ENCODE measurements at regions of chr1 and their contacts with region 1.

Region 1: DNA sequence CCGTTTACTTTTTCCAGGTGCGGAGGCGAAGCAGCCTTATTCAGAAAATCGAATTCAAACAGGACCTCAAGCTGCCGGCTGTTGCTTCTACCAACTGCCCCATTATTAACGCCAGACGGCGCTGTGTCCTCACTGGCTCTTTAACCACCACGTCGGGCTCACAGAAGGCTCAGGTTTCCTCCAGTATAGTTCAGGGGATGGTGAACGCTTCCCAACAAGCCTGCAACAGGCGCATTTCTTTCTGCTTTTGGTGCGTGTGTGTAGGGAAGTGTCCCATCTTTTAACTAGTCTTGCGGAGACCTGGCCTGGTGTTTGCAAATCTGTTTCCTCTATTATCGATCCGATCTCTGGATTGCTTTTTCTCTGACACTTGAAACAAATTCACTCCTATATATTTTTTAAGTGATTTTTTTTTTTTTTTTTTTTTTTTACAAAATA is 791 bp upstream of the STUM start:
- DNase-seq: no peak
- H3K4me3 ChIP-seq: peak overlapping the region; percentile 46 to 69
- H3K27ac ChIP-seq: peak overlapping the region; percentile 17
- H3K4me1 ChIP-seq: peaks cover 24% of the 10 kb centered on the region
- H3K27me3 ChIP-seq: no peaks in the 10 kb centered on the region
- CTCF ChIP-seq: peak; percentile 52 to 85 (median 74)
- POLR2A ChIP-seq: no peak

Region 2: GRCh38 chr1:226608699-226609505 is 61.1 kb after region 1 on chr1:
- intact Hi-C with region 1: loop called (anchors 5 kb)
- DNase-seq: no peak
- H3K4me3 ChIP-seq: peak overlapping the region in 1 of 2 donors; percentile 2
- H3K27ac ChIP-seq: no peak overlapping the region
- H3K4me1 ChIP-seq: peaks cover 31% of the 10 kb centered on the region
- H3K27me3 ChIP-seq: no peaks in the 10 kb centered on the region
- CTCF ChIP-seq: peak; percentile 17 to 72 (median 66)
- POLR2A ChIP-seq: no peak

Measured in vagina (tissue), 2 donors.